ENCODE measurements at regions of chr12 and their contacts with region 1.

Region 1: DNA sequence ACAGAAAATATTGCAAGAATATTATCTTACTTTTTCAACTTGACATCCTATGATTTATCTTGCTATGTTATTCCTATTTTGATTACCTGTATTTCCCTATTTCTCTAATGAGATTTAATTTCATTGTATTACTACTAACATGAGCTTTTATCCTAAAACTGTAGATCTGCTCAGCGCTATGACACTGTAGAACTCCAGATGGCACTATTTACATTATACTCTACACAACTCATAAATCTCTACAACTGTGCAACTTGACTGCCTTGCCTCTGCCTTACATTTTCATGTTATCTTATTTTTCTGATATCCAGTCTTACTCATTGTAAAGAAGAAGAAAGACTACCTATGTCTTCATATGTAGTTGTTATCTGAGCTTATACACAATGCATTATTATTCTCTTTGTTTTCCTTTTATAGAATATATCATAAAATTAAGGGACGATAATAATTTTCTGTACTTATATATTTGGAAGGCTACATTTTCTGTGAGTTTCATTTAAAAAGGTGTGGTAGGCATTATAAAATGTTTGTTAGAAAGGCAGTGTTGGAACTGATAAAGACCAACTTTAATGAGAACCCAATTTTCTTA is 24.1 kb downstream of the NUP37 start:
- DNase-seq: no peak

Region 2: GRCh38 chr12:101773650-101774162 is 322.1 kb before region 1 on chr12:
- intact Hi-C with region 1: no loop called
- DNase-seq: peak in 7 of 10 donors; percentile 30 to 90 (median 62)

Region 3: GRCh38 chr12:102033991-102034745 is 61.6 kb before region 1 on chr12:
- intact Hi-C with region 1: no loop called
- DNase-seq: no peak

Region 4: GRCh38 chr12:102484428-102484958 is 388.7 kb after region 1 on chr12:
- intact Hi-C with region 1: loop called (anchors 10 kb)
- DNase-seq: peak in 8 of 10 donors; percentile 12 to 80 (median 61)

Region 5: DNA sequence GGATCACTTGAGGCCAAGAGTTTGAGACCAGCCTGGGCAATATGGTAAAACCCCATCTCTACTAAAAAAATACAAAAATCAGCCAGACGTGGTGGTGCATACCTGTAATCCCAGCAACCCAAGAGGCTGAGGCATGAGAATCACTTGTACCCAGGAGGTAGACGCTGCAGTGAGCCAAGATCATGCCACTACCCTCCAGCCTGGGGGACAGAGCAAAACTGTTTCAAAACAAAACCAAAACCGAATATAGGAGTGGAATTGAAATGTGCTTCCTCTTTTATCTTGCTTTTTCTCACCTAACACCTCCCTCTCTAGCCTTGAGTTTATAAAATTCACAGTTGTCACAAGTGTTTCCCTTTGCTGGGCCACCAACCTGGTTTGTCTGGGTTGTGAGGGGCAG is 639.3 kb after region 1 on chr12:
- intact Hi-C with region 1: loop called (anchors 10 kb)
- DNase-seq: no peak

Region 6: DNA sequence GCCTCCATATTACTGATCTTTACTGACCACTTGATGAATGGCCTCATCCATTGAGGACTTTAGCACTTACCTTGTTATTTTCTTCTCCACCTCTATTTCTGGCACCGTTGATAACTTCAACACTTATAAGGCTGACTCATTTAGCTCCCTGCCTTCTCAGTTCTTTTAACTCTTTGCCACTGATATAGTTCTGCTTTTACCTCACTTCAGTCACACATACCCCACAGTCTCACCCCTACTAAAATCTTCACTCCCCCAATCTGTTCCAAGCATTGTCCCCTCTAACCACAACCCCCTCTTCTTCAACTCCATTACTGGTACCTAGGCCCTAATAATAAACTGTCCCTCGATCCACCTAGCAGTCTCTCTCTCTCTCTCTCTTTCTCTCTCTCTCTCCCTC is 680.3 kb after region 1 on chr12:
- intact Hi-C with region 1: loop called (anchors 10 kb)
- DNase-seq: no peak